ENCODE measurements at regions of chr11 and their contacts with region 1.

Region 1: DNA sequence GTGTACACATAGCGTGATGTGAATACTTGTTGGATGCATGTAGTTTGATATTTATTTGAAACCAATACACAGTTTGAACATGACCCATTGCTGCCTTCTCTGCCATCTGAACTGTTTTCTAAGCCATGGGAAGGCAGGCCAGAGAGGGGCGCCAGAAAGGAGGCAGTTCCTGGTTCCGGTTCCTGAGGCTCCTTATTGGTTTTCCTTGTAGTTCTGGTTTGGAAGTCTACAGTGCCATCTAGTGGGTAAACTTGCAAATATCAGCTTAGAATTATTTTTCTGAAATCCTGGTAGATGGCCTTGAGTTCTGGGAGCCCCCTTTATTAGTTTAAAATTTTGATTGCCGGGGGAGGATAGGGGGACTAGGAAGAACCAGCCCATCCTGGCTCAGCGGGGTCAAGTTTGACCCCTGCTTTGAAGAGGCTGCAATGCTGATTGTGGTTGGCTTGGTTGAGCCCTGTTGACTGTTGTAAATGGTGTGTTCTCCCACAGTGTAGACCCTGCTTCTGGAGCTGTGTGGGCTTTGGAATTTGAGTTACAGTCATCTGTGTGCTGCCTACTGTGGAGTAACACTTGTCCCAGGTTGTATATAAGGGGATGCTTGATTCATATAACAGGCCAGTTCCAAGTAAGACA is 48.4 kb downstream of the GRAMD1B start:
- DNase-seq: peak; percentile 9
- H3K4me3 Mint-ChIP-seq: peak overlapping the region; percentile 32
- H3K27ac Mint-ChIP-seq: peak overlapping the region; percentile 70
- H3K4me1 Mint-ChIP-seq: peaks cover 78% of the 10 kb centered on the region
- H3K27me3 Mint-ChIP-seq: no peaks in the 10 kb centered on the region

Region 2: DNA sequence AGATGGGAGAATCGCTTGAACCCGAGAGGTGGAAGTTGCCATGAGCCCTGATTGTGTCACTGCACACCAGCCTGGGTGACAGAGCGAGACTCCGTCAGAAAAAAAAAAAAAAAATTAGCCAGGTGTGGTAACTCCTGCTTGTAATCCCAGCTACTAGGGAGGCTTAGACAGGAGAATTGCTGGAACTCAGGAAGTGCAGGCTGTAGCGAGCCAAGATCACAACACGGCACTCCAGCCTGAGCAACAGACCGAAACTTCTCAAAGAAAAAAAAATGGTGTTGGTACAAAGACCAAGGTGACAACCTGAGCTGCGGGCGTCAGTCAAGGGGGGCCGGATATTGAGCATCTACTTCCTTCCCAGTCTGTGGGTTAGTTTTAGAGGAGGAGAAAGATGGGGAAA is 368.1 kb before region 1 on chr11:
- intact Hi-C with region 1: loop called (anchors 1 kb)
- DNase-seq: no peak
- H3K4me3 Mint-ChIP-seq: no peak overlapping the region
- H3K27ac Mint-ChIP-seq: no peak overlapping the region
- H3K4me1 Mint-ChIP-seq: no peaks in the 10 kb centered on the region
- H3K27me3 Mint-ChIP-seq: peaks cover 24% of the 10 kb centered on the region

Region 3: DNA sequence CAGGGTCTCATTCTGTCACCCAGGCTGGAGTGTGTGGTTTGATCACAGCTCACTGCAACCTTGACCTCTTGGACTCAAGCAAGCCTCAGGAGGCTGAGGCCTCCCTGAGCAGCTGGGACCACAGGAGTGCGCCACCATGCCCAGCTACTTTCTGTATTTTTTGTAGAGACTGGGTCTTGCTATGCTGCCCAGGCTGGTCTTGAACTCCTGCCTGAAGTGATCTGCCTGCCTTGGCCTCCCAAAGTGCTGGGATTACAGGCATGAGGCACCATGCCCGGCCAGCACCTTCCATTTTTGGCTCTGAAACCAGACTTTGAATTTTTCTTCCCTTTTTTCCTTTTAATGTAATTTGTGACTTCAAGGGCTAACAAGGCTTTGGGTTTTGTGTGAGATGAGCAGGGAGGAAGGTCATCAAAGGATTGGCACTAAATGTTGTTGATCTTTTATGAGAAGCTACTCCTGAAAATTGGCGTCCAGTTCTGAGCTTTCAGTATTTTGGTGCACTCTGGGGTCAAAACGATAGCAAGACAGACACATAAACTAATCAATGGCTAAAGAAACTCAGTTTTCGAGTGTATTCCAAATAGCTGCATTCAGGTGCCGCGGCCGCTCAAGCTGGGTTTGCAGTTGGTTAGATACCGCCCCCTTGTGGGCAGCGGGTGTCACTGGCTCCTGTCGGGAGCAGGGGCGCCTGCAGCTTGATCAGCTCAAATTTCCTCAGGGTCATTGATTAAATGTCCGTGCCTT is 231.5 kb before region 1 on chr11:
- intact Hi-C with region 1: loop called (anchors 1 kb)
- DNase-seq: peak; percentile 71
- H3K4me3 Mint-ChIP-seq: no peak overlapping the region
- H3K27ac Mint-ChIP-seq: no peak overlapping the region
- H3K4me1 Mint-ChIP-seq: peaks cover 13% of the 10 kb centered on the region
- H3K27me3 Mint-ChIP-seq: peaks cover 26% of the 10 kb centered on the region

Region 4: GRCh38 chr11:123407130-123407995 is 71.1 kb before region 1 on chr11:
- intact Hi-C with region 1: loop called (anchors 1 kb)
- DNase-seq: peak; percentile 20
- H3K4me3 Mint-ChIP-seq: peak overlapping the region; percentile 77
- H3K27ac Mint-ChIP-seq: peak overlapping the region; percentile 90
- H3K4me1 Mint-ChIP-seq: peaks cover 70% of the 10 kb centered on the region
- H3K27me3 Mint-ChIP-seq: no peaks in the 10 kb centered on the region

Region 5: GRCh38 chr11:123454060-123454651 is 24.3 kb before region 1 on chr11:
- intact Hi-C with region 1: loop called (anchors 1 kb)
- DNase-seq: peak; percentile 74
- H3K4me3 Mint-ChIP-seq: peak overlapping the region; percentile 82
- H3K27ac Mint-ChIP-seq: peak overlapping the region; percentile 97
- H3K4me1 Mint-ChIP-seq: peaks cover 98% of the 10 kb centered on the region
- H3K27me3 Mint-ChIP-seq: no peaks in the 10 kb centered on the region